Mammary epithelial cell (primary cell): ENCODE measurements at regions of chr7 and their contacts with region 1.

Region 1: DNA sequence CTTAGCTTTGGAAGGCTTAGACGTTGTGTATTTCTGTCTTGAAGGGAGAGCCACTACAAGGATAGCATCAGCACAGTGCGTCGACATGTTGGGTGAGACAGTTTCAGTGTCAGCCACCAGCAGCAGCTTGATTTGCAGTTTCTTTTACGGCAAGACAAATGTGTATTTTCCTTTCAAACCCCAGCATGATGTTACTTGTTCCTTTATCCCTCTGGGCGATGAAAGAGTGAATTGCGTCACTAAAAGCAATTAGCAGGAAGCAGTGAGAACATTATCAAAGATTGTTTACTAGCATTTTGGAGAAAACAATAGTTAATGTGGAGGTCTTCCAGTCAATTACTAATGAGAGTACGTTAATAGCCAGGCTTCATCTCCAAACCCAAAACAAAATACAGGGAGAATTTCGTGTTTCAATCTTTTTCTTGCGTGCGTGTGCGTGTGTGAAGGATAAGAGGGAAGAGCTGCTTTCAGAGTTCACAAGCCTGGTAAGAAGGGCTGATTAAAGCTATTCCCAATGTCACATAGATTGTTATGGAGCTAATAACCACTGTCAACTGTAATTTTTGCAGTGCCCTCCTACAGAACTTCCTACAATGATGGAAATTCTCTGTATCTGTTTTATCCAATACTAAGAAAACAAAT is 157.1 kb upstream of the AOAH start:
- DNase-seq: peak; percentile 77
- H3K4me3 ChIP-seq: no peak overlapping the region
- H3K27ac ChIP-seq: peak overlapping the region; percentile 35
- H3K4me1 ChIP-seq: peaks cover 12% of the 10 kb centered on the region
- H3K27me3 ChIP-seq: no peaks in the 10 kb centered on the region
- CTCF ChIP-seq: no peak

Region 2: GRCh38 chr7:36827726-36828703 is 53.3 kb before region 1 on chr7:
- CTCF ChIA-PET with region 1: no interaction called
- dilution Hi-C with region 1: loop called (anchors 5 kb)
- in situ Hi-C with region 1: no loop called
- intact Hi-C with region 1: no loop called
- DNase-seq: peak; percentile 81
- H3K4me3 ChIP-seq: no peak overlapping the region
- H3K27ac ChIP-seq: no peak overlapping the region
- H3K4me1 ChIP-seq: peaks cover 8% of the 10 kb centered on the region
- H3K27me3 ChIP-seq: no peaks in the 10 kb centered on the region
- CTCF ChIP-seq: no peak

Region 3: DNA sequence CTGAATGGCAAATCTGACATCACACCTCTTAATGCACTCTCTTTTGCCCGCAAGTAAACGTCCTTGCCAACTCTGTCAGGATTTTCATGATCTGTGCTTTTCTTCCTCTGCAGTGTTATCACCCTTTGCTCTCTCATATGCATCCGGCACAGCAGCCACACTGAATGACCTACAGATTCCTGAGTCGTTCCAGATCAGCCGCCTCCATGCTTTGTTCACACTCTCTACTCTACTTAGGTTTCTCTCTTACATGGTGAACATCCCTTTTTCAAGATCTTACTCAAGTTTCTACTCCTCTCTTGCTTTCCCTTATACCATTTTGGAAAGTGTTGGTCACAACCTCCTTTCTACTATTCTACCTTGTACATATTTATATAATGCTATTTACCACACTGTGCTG is 29.3 kb before region 1 on chr7:
- CTCF ChIA-PET with region 1: no interaction called
- dilution Hi-C with region 1: no loop called
- in situ Hi-C with region 1: no loop called
- intact Hi-C with region 1: no loop called
- DNase-seq: no peak
- H3K4me3 ChIP-seq: no peak overlapping the region
- H3K27ac ChIP-seq: no peak overlapping the region
- H3K4me1 ChIP-seq: peaks cover 16% of the 10 kb centered on the region
- H3K27me3 ChIP-seq: no peaks in the 10 kb centered on the region
- CTCF ChIP-seq: no peak

Region 4: DNA sequence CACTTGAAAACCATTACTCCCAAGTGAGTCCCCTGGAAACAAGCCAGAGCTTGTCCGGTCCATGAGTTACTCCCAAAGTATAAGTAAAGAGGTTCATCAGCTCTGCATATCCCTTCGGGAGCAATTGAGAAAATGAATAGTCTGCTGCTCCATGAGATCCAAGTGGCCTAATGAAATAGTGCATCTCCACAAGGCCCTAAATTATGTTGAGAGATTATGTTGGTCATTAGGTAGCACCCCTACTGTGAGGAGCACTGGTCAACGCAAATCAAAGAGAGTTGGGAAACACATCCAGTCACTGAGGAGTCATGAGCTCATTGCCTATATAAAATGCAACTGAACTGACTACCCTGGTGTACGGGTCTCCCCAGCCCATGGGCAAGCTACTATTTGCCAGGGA is 48.4 kb after region 1 on chr7:
- CTCF ChIA-PET with region 1: no interaction called
- dilution Hi-C with region 1: loop called (anchors 5 kb)
- in situ Hi-C with region 1: no loop called
- intact Hi-C with region 1: no loop called
- DNase-seq: no peak
- H3K4me3 ChIP-seq: no peak overlapping the region
- H3K27ac ChIP-seq: no peak overlapping the region
- H3K4me1 ChIP-seq: no peaks in the 10 kb centered on the region
- H3K27me3 ChIP-seq: no peaks in the 10 kb centered on the region
- CTCF ChIP-seq: no peak